ENCODE measurements at regions of chr2 and their contacts with region 1.

Region 1: GRCh38 chr2:191677646-191678436 is at the start of gene NABP1:
- DNase-seq: peak; percentile 93
- H3K4me3 ChIP-seq: peak within 1 kb of the TSS; percentile 78
- CTCF ChIP-seq: no peak

Region 2: DNA sequence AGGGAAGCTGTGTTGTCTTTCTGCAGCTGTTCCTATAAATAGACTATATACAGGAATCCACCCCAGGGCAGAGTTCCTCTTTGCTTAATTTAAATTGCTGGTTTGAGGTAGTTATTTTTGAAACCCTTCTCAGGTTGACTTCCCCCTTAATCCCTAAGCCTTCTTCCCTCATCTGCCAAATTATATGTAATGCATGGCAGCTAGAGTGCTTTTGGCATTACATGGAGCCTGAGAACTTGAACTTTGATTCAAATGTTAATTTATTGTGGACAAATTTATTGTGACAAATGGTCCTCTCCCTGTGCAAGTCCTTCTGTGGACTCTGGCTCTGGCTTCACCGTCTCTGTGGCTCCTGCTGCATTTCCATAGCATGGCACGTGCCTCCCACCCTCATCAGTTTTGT is 403.4 kb before region 1 on chr2:
- in situ Hi-C with region 1: no loop called
- DNase-seq: no peak
- H3K4me3 ChIP-seq: no peak overlapping the region
- CTCF ChIP-seq: no peak

Region 3: DNA sequence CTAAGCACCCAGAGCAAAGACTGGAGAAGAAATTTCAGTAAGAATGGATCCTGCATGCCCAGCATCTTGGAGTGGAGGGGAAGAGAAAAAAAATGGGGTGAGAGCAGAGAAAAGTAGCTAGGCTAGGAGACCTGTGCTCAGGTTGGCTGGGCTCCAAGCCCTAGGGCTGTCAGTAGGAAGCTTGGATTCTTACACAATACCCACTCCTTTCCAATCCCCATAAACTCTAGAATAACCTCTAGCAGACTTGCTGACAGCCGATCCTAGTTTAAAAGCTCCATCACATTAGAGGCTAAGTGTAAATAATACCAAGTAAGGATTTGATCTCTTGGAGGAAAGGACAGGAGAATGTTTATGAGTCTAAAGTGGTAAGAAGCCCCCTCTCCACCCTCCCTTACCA is 46.1 kb before region 1 on chr2:
- in situ Hi-C with region 1: loop called (anchors 5 kb)
- DNase-seq: peak; percentile 27
- H3K4me3 ChIP-seq: no peak overlapping the region
- CTCF ChIP-seq: no peak

Measured in astrocyte of the cerebellum (primary cell).